ENCODE measurements at regions of chr6 and their contacts with region 1.

Region 1: GRCh38 chr6:90285611-90286381 is 10.8 kb downstream of the BACH2 start:
- DNase-seq: peak; percentile 90
- H3K4me3 ChIP-seq: peak overlapping the region in 1 of 3 experiments; percentile 64
- H3K27ac ChIP-seq: peak overlapping the region; percentile 99
- H3K4me1 ChIP-seq: peaks cover 22% of the 10 kb centered on the region
- H3K27me3 ChIP-seq: no peaks in the 10 kb centered on the region
- CTCF ChIP-seq: no peak
- POLR2A ChIP-seq: no peak

Region 2: DNA sequence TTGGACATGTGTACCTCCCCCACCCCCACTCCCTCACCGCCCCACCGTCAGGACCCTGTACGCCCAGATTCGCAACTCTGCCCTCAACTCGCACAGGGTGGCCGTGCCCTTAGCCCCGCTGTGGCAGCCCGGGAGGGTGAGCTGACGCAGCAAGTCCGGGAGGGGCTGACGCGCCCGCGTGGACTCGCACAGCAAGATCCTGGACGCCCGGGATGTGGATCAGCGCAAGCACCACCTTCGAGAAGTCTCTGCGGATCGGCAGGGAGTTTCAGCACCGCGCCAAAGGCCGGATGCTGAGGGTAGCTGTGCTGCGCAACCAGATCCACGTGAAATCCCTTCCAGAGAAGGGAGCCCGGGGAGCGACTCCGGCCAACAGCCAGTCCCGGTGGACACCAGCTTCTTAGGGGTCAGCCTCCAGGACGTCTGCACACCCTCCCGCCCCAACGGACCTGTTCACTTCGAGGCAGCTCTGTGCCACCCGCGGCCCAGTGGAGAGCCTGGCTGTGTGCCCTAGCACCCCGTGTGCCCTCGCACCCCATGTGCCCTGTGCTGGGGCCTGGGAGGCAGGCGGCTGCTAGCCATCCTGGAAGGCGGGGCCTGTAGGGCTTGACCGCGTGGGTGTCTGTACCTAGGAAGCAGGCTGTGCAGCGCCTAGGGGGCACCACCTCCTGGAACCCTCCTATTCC is 398.2 kb before region 1 on chr6:
- CTCF ChIA-PET with region 1: no interaction called
- POLR2A ChIA-PET with region 1: no interaction called
- dilution Hi-C with region 1: no loop called
- intact Hi-C with region 1: no loop called
- DNase-seq: no peak
- H3K4me3 ChIP-seq: no peak overlapping the region
- H3K27ac ChIP-seq: no peak overlapping the region
- H3K4me1 ChIP-seq: no peaks in the 10 kb centered on the region
- H3K27me3 ChIP-seq: peaks cover 3 to 21% of the 10 kb centered on the region in 2 experiments
- CTCF ChIP-seq: no peak
- POLR2A ChIP-seq: no peak

Region 3: GRCh38 chr6:89954721-89955149 is 331.1 kb before region 1 on chr6:
- CTCF ChIA-PET with region 1: no interaction called
- POLR2A ChIA-PET with region 1: no interaction called
- dilution Hi-C with region 1: no loop called
- intact Hi-C with region 1: no loop called
- DNase-seq: no peak
- H3K4me3 ChIP-seq: no peak overlapping the region
- H3K27ac ChIP-seq: no peak overlapping the region
- H3K4me1 ChIP-seq: peaks cover 8% of the 10 kb centered on the region
- H3K27me3 ChIP-seq: peaks cover 0 to 2% of the 10 kb centered on the region in 2 experiments
- CTCF ChIP-seq: no peak
- POLR2A ChIP-seq: no peak

Region 4: GRCh38 chr6:90008908-90009501 is 276.8 kb before region 1 on chr6:
- CTCF ChIA-PET with region 1: no interaction called
- POLR2A ChIA-PET with region 1: no interaction called
- dilution Hi-C with region 1: no loop called
- intact Hi-C with region 1: loop called (anchors 1 kb)
- DNase-seq: peak; percentile 86
- H3K4me3 ChIP-seq: peak overlapping the region in 1 of 3 experiments; percentile 9
- H3K27ac ChIP-seq: peak overlapping the region; percentile 85
- H3K4me1 ChIP-seq: peaks cover 16% of the 10 kb centered on the region
- H3K27me3 ChIP-seq: no peaks in the 10 kb centered on the region
- CTCF ChIP-seq: no peak
- POLR2A ChIP-seq: no peak

Region 5: GRCh38 chr6:90088009-90088408 is 197.8 kb before region 1 on chr6:
- CTCF ChIA-PET with region 1: no interaction called
- POLR2A ChIA-PET with region 1: no interaction called
- dilution Hi-C with region 1: no loop called
- intact Hi-C with region 1: loop called (anchors 2 kb)
- DNase-seq: peak; percentile 62
- H3K4me3 ChIP-seq: no peak overlapping the region
- H3K27ac ChIP-seq: no peak overlapping the region
- H3K4me1 ChIP-seq: peaks cover 12% of the 10 kb centered on the region
- H3K27me3 ChIP-seq: peaks cover under 1 to 2% of the 10 kb centered on the region in 2 experiments
- CTCF ChIP-seq: no peak
- POLR2A ChIP-seq: no peak

Region 6: GRCh38 chr6:90256698-90257485 is 28.9 kb before region 1 on chr6:
- CTCF ChIA-PET with region 1: interaction called, 3 read pairs
- POLR2A ChIA-PET with region 1: no interaction called
- dilution Hi-C with region 1: no loop called
- intact Hi-C with region 1: loop called (anchors 1 kb)
- DNase-seq: peak; percentile 85
- H3K4me3 ChIP-seq: no peak overlapping the region
- H3K27ac ChIP-seq: peak overlapping the region; percentile 60
- H3K4me1 ChIP-seq: peaks cover 9% of the 10 kb centered on the region
- H3K27me3 ChIP-seq: no peaks in the 10 kb centered on the region
- CTCF ChIP-seq: no peak
- POLR2A ChIP-seq: no peak

Region 7: GRCh38 chr6:90369024-90369519 is 83.3 kb after region 1 on chr6:
- CTCF ChIA-PET with region 1: interaction called, 8 read pairs
- POLR2A ChIA-PET with region 1: interaction called, 4 read pairs
- dilution Hi-C with region 1: no loop called
- intact Hi-C with region 1: loop called (anchors 1 kb)
- DNase-seq: peak; percentile 98
- H3K4me3 ChIP-seq: peak overlapping the region in 1 of 3 experiments; percentile 12
- H3K27ac ChIP-seq: peak overlapping the region; percentile 78
- H3K4me1 ChIP-seq: peaks cover 16% of the 10 kb centered on the region
- H3K27me3 ChIP-seq: no peaks in the 10 kb centered on the region
- CTCF ChIP-seq: no peak
- POLR2A ChIP-seq: no peak

Region 8: DNA sequence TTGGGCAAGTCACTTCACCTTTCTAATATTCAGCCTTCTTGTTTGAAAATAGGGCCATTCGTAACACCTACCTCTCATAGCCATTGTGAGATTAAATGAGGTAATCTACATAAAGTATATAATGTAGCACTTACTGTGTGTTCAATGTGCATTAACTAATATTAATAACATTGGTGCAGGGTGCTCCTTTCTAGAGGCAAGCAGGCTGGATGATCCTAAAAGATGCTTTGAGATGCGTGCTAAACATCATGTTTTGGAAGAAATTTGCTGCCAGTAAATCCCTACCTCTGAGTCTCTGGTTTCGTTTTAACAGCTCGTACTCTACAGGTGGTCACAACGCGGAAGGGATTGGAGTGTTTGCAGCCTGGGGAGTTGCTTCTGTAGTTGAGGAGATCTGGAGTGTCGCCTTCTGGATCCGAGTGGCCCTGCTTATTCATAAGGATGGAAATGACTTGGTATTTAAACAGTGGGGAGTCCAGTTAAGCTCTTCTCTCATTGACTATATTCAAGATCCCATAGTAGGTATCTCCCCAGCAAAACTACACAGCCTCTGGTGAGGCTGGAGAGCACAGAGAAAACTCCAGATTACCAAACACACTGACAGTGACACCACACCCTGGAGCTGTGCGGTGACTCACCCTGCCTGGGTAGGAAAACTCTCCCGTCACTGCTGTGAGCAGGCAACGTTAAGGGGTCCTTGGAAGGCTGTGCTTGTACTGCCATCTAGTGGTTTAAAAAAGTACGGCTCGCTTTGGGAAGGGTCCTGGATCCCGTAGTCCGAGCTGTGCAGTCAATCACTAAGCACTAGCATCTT is 193.2 kb after region 1 on chr6:
- CTCF ChIA-PET with region 1: interaction called, 14 read pairs
- POLR2A ChIA-PET with region 1: no interaction called
- dilution Hi-C with region 1: no loop called
- intact Hi-C with region 1: loop called (anchors 1 kb)
- DNase-seq: peak; percentile 89
- H3K4me3 ChIP-seq: no peak overlapping the region
- H3K27ac ChIP-seq: no peak overlapping the region
- H3K4me1 ChIP-seq: peaks cover 9% of the 10 kb centered on the region
- H3K27me3 ChIP-seq: peaks cover 0 to 3% of the 10 kb centered on the region in 2 experiments
- CTCF ChIP-seq: peak; percentile 75 to 81
- POLR2A ChIP-seq: no peak

Region 9: GRCh38 chr6:90586836-90587638 is 301.2 kb after region 1 on chr6 and contains the start of gene MAP3K7:
- CTCF ChIA-PET with region 1: no interaction called
- POLR2A ChIA-PET with region 1: no interaction called
- dilution Hi-C with region 1: no loop called
- intact Hi-C with region 1: loop called (anchors 5 kb)
- DNase-seq: peak; percentile 98
- H3K4me3 ChIP-seq: peak within 1 kb of the TSS; percentile 84 to 100 (median 95)
- H3K27ac ChIP-seq: peak within 1 kb of the TSS; percentile 88
- H3K4me1 ChIP-seq: peaks cover 22% of the 10 kb centered on the region
- H3K27me3 ChIP-seq: peaks cover 2 to 4% of the 10 kb centered on the region in 2 experiments
- CTCF ChIP-seq: no peak
- POLR2A ChIP-seq: peak; percentile 86
- total RNA-seq, gene MAP3K7: 24.5 and 25.6 TPM in 2 replicates